ENCODE measurements at regions of chr11 and their contacts with region 1.

Region 1: DNA sequence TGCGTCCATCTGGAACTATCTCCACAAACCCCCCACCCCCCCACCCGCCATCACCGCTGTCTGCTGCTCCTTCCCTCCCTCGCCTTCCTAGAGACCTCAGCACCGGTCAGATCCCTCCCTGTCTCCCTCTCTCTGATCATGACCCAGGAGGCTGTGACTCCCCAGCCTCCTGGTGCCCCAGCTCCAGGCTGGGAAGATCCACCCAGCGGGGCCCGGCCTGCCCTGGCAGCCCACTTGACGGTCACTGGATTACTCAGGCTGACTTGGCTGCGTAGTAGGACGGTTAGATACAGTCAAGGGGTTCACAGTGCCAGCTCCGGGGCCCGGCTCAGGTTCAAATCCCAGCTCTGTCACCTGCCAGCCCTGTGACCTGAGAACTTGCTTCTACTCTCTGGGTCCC is 59.3 kb downstream of the ANO1 start:
- DNase-seq: no peak
- H3K4me3 ChIP-seq: no peak overlapping the region
- H3K27ac ChIP-seq: no peak overlapping the region
- H3K27me3 ChIP-seq: peaks cover 2% of the 10 kb centered on the region
- CTCF ChIP-seq: no peak

Region 2: DNA sequence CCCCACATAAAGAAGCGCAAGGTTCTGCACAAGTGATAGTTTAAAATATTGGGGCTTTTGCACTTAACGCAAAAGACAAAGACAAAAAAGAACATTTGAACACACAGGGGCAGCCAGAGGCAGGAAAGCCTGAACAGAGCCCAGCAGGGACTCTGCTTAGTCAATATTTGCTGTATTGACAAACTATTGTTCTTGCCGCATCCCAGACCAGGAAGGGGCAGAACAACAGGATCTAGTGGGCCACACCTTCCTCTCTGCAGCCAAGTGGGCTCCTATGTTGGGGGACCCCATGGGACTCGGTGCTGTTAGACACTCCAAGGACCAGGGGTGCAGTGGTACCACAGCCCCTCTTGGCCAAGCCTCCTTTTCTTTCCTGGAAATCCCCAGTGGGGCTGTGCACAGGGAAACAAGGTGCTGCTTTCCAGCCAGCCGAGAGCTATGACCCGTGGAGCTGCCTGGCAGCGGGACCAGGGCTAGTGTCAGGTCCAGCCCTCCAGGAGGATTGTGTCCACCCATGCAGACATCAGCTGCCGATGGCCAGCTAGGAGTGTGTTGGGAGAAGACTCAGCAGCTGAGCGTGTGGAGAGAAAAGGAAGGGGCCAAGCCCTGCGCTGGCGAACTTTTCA is 102.5 kb before region 1 on chr11:
- CTCF ChIA-PET with region 1: no interaction called
- POLR2A ChIA-PET with region 1: no interaction called
- DNase-seq: no peak
- H3K4me3 ChIP-seq: no peak overlapping the region
- H3K27ac ChIP-seq: no peak overlapping the region
- H3K27me3 ChIP-seq: peaks cover 8% of the 10 kb centered on the region
- CTCF ChIP-seq: no peak

Region 3: DNA sequence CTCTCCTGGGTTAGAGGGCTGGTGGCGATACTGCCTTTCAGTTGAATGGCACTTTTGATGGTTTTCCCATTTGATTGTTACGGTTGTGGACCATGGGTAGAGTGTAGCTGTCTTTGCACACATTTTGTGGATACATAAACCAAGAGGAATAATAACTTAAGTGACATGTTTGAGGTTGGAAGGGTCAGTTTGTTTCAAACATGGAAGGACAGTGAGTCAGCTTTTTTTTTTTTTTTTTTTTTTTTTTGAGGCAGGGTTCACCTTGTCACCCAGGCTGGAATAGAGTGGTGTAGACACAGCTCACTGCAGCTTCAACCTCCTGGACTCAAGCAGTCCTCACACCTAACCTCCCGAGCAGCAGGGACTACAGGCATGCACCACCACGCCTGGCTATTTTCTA is 174.2 kb after region 1 on chr11:
- CTCF ChIA-PET with region 1: no interaction called
- POLR2A ChIA-PET with region 1: interaction called, 13 read pairs
- DNase-seq: no peak
- H3K4me3 ChIP-seq: no peak overlapping the region
- H3K27ac ChIP-seq: no peak overlapping the region
- H3K27me3 ChIP-seq: no peaks in the 10 kb centered on the region
- CTCF ChIP-seq: no peak

Measured in AG04450 (cell line).